ENCODE measurements at regions of chr17 and their contacts with region 1.

Region 1: GRCh38 chr17:78313735-78314648 is 45.9 kb downstream of the SOCS3 start:
- DNase-seq: peak; percentile 72
- H3K4me3 Mint-ChIP-seq: peak overlapping the region; percentile 75
- H3K27ac Mint-ChIP-seq: peak overlapping the region; percentile 59
- H3K4me1 Mint-ChIP-seq: peaks cover 44% of the 10 kb centered on the region
- H3K27me3 Mint-ChIP-seq: peaks cover 9% of the 10 kb centered on the region

Region 2: GRCh38 chr17:78089576-78090281 is 224.3 kb before region 1 on chr17:
- intact Hi-C with region 1: no loop called
- DNase-seq: no peak
- H3K4me3 Mint-ChIP-seq: no peak overlapping the region
- H3K27ac Mint-ChIP-seq: peak overlapping the region; percentile 12
- H3K4me1 Mint-ChIP-seq: peaks cover 9% of the 10 kb centered on the region
- H3K27me3 Mint-ChIP-seq: no peaks in the 10 kb centered on the region

Region 3: DNA sequence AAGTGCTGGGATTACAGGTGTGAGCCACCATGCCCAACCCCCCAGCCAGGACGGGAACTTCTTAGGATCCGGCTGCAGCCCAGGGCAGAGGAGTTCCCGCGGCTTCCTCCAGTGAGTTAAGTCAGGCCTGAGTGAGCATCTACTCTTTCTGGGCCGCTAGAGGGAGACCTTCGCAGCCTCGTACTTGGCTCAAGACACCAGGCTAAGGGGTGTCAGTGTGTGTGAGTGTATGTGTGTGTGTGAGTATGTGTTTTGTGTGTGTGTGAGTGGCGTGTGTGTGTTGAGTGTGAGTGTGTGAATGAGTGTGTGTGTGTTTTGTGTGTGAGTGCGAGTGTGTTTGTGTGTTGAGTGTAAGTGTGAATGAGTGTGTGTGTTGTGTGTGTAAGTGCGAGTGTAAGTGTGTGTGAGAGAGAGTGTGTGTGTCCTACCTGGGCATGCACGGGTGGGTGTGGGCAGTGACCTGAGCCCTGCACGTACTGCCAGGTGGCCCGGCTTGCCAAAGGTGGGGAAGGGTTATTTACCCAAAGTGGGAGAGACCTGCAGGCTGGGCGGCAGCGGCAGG is 24.1 kb before region 1 on chr17:
- intact Hi-C with region 1: loop called (anchors 2 kb)
- DNase-seq: peak; percentile 68
- H3K4me3 Mint-ChIP-seq: no peak overlapping the region
- H3K27ac Mint-ChIP-seq: no peak overlapping the region
- H3K4me1 Mint-ChIP-seq: peaks cover 6% of the 10 kb centered on the region
- H3K27me3 Mint-ChIP-seq: no peaks in the 10 kb centered on the region

Region 4: DNA sequence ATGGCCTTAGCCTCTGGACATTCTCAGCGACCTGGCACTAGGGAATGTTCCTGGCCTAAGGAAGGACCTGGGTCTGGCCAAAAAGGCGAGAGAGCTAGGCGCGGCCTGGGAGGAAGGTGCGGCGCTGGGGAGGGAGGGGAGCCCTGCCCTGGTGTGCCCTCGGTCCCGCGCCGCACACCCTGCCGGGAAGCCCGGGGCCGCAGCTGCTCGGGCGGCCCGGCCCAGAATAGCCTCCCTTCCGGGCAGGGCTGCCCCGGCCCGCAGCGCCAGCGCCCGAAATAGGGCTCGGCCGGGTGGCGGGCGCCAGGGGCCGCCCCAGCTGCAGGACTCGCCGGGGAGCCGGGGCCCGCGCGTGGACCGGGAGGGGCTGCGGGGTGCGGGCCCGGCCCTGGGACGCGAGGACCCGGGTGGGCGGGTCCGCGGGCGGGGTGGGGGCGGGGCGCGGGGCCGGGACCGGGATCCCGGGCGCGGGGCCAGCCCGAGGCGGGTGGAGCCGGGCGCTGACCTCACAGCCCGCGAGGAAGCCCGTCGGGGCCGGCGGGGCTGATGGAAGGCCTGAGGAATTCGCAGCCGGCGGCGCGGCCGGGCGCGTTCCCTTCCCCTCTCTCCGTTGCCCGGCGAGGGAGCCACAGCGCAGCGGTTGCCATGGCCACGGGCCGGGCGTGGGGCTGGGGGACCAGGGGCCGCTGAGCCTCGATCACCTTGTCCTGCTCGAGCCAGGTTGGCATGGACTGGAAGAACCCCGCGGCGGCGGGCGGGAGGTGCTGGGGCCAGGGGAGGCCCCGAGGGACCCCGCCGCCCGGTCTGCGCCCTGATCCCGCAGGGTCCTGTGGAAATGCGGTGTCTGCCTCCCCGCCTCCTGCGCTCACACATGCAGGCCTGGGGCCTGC is 27.8 kb after region 1 on chr17:
- intact Hi-C with region 1: loop called (anchors 2 kb)
- DNase-seq: no peak
- H3K4me3 Mint-ChIP-seq: no peak overlapping the region
- H3K27ac Mint-ChIP-seq: no peak overlapping the region
- H3K4me1 Mint-ChIP-seq: peaks cover 60% of the 10 kb centered on the region
- H3K27me3 Mint-ChIP-seq: peaks cover 4% of the 10 kb centered on the region

Measured in activated T-helper 1 cell treated with anti-CD3 and anti-CD28 coated beads, Interleukin-12 subunit alpha, Interleukin-12 subunit beta, Interleukin-2, Interleukin-4 antibody, amounts not matched to agents 30 ng/mL and 10 ng/mL and 1 ng/mL, durations not matched to agents 14 hours and 24 hours and 36 hours (primary cell).